CD8-positive, alpha-beta T cell (primary cell): ENCODE measurements at regions of chr9 and their contacts with region 1.

Region 1: GRCh38 chr9:134067904-134068743 is at the start of gene BRD3:
- DNase-seq: peak; percentile 60 to 95 (median 80)
- ATAC-seq: peak; percentile 77
- H3K4me3 ChIP-seq: peak within 1 kb of the TSS; percentile 74 to 89
- H3K4me3 Mint-ChIP-seq: peak within 1 kb of the TSS; percentile 87
- H3K27ac ChIP-seq: peak within 1 kb of the TSS; percentile 87 to 90
- H3K27ac Mint-ChIP-seq: peak within 1 kb of the TSS; percentile 96
- H3K4me1 ChIP-seq: peaks cover 12% of the 10 kb centered on the region
- H3K4me1 Mint-ChIP-seq: peaks cover 32% of the 10 kb centered on the region
- H3K27me3 ChIP-seq: peaks cover 4% of the 10 kb centered on the region in 2 experiments
- H3K27me3 Mint-ChIP-seq: peaks cover 21% of the 10 kb centered on the region
- CTCF ChIP-seq: no peak
- total RNA-seq, gene BRD3: 34.3 to 41.4 TPM

Region 2: DNA sequence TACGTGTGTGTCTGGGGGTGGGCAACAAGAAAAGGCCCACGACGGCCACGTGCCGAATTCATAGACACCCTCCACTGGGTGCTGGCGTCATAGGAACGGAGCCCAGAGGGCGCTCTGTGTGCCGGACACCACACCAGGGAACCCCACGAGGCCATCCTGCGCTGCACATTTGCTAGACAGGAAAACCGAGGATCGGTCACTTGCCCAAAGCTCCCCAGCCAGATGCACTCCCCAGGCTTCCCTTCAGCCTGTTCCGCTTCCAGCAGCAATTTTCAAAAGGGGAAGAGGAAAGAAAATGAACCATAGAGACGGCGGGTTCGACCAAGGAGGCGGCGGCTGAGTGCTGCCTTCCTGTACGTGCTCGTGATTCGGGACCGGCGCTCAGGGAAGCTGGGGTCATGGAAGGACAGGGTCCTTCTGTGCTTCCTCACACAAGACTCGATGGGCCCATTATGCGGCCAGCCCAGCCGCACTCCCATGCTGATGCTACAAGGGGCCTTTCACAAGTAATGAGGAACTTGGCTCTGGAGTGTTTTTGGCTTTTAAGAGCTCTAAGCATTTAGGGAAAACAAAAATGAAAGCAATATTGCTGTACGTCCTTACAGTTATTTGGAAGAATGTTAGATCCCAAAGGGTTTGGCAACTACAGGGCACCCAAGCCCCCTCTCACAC is 205.4 kb before region 1 on chr9:
- CTCF ChIA-PET with region 1: no interaction called
- POLR2A ChIA-PET with region 1: no interaction called
- intact Hi-C with region 1: no loop called
- DNase-seq: no peak
- ATAC-seq: no peak
- H3K4me3 ChIP-seq: no peak overlapping the region
- H3K4me3 Mint-ChIP-seq: no peak overlapping the region
- H3K27ac ChIP-seq: no peak overlapping the region
- H3K27ac Mint-ChIP-seq: no peak overlapping the region
- H3K4me1 ChIP-seq: no peaks in the 10 kb centered on the region
- H3K4me1 Mint-ChIP-seq: no peaks in the 10 kb centered on the region
- H3K27me3 ChIP-seq: no peaks in the 10 kb centered on the region
- H3K27me3 Mint-ChIP-seq: no peaks in the 10 kb centered on the region
- CTCF ChIP-seq: no peak

Region 3: GRCh38 chr9:133992780-133993634 is 75.1 kb before region 1 on chr9:
- CTCF ChIA-PET with region 1: interaction called, 4 read pairs
- POLR2A ChIA-PET with region 1: no interaction called
- intact Hi-C with region 1: loop called (anchors 1 to 2 kb)
- DNase-seq: peak; percentile 51 to 87 (median 74)
- ATAC-seq: peak; percentile 86
- H3K4me3 ChIP-seq: peak overlapping the region; percentile 72 to 76
- H3K4me3 Mint-ChIP-seq: peak overlapping the region; percentile 82
- H3K27ac ChIP-seq: no peak overlapping the region
- H3K27ac Mint-ChIP-seq: no peak overlapping the region
- H3K4me1 ChIP-seq: peaks cover 15% of the 10 kb centered on the region
- H3K4me1 Mint-ChIP-seq: peaks cover 5% of the 10 kb centered on the region
- H3K27me3 ChIP-seq: peaks cover 0 to 9% of the 10 kb centered on the region in 2 experiments
- H3K27me3 Mint-ChIP-seq: peaks cover 8% of the 10 kb centered on the region
- CTCF ChIP-seq: no peak

Region 4: GRCh38 chr9:134049236-134049635 is 18.9 kb before region 1 on chr9:
- CTCF ChIA-PET with region 1: no interaction called
- POLR2A ChIA-PET with region 1: no interaction called
- intact Hi-C with region 1: no loop called
- DNase-seq: no peak
- ATAC-seq: no peak
- H3K4me3 ChIP-seq: no peak overlapping the region
- H3K4me3 Mint-ChIP-seq: no peak overlapping the region
- H3K27ac ChIP-seq: no peak overlapping the region
- H3K27ac Mint-ChIP-seq: no peak overlapping the region
- H3K4me1 ChIP-seq: no peaks in the 10 kb centered on the region
- H3K4me1 Mint-ChIP-seq: no peaks in the 10 kb centered on the region
- H3K27me3 ChIP-seq: no peaks in the 10 kb centered on the region
- H3K27me3 Mint-ChIP-seq: no peaks in the 10 kb centered on the region
- CTCF ChIP-seq: no peak

Region 5: GRCh38 chr9:134099123-134099787 is 31.1 kb after region 1 on chr9:
- CTCF ChIA-PET with region 1: no interaction called
- POLR2A ChIA-PET with region 1: interaction called, 4 read pairs
- intact Hi-C with region 1: loop called in 1 of 2 experiments (anchors 1 kb)
- DNase-seq: peak; percentile 24 to 73 (median 62)
- ATAC-seq: peak; percentile 99
- H3K4me3 ChIP-seq: no peak overlapping the region
- H3K4me3 Mint-ChIP-seq: no peak overlapping the region
- H3K27ac ChIP-seq: no peak overlapping the region
- H3K27ac Mint-ChIP-seq: no peak overlapping the region
- H3K4me1 ChIP-seq: no peaks in the 10 kb centered on the region
- H3K4me1 Mint-ChIP-seq: no peaks in the 10 kb centered on the region
- H3K27me3 ChIP-seq: peaks cover 0 to 8% of the 10 kb centered on the region in 2 experiments
- H3K27me3 Mint-ChIP-seq: peaks cover 15% of the 10 kb centered on the region
- CTCF ChIP-seq: peak; percentile 90

Region 6: GRCh38 chr9:134163353-134164196 is 95.5 kb after region 1 on chr9:
- CTCF ChIA-PET with region 1: no interaction called
- POLR2A ChIA-PET with region 1: interaction called, 10 read pairs
- intact Hi-C with region 1: loop called (anchors 1 kb)
- DNase-seq: peak; percentile 38 to 87 (median 68)
- ATAC-seq: peak; percentile 19
- H3K4me3 ChIP-seq: no peak overlapping the region
- H3K4me3 Mint-ChIP-seq: no peak overlapping the region
- H3K27ac ChIP-seq: no peak overlapping the region
- H3K27ac Mint-ChIP-seq: no peak overlapping the region
- H3K4me1 ChIP-seq: peaks cover 18% of the 10 kb centered on the region
- H3K4me1 Mint-ChIP-seq: peaks cover 17% of the 10 kb centered on the region
- H3K27me3 ChIP-seq: no peaks in the 10 kb centered on the region
- H3K27me3 Mint-ChIP-seq: no peaks in the 10 kb centered on the region
- CTCF ChIP-seq: peak; percentile 32

Region 7: DNA sequence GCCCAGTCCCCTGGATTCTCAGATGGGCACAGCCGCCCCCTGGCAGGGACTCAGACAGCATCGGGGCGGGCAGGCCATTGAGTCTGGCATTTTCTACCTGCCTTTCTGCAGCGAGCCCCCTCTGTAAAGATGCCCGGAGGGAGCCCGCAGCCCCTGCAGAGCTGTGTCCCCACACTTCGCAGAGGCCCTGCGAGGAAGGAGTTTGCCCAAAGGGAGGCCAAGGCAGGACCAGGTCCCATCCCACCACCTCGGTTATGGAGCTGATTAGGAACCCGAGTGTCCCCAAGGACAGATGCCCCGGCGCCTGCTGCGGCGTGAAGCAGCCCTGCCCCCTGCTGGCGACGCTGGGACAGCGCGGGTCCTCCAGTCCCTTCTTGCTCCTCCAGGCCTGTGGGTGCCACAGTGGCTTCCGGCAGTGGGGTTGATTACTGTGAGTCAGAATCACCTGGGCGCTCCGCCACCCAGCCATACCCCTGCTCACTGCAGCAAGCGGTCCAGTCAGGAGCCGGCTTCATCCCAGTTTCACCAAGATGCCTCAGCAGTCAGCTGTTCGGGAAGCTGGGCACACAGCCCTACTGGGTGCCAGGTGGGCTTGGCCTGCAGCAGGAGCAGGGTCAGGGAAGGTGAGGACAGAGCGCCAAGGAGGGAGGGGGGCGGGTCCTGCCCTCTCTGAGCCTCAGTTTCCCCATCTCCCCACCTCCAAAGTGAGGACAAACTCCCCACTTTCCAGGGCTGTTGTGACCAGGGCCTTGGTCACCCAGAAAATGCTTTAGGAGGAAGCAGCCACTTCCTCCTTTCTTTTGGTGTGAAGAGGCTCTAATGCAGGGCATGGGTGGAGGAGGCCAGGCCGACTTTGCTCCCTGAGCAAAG is 375.3 kb after region 1 on chr9:
- CTCF ChIA-PET with region 1: no interaction called
- POLR2A ChIA-PET with region 1: no interaction called
- intact Hi-C with region 1: loop called in 1 of 2 experiments (anchors 5 kb)
- DNase-seq: peak; percentile 70 to 94 (median 88)
- ATAC-seq: peak; percentile 99
- H3K4me3 ChIP-seq: no peak overlapping the region
- H3K4me3 Mint-ChIP-seq: no peak overlapping the region
- H3K27ac ChIP-seq: peak overlapping the region in 1 of 2 experiments; percentile 28
- H3K27ac Mint-ChIP-seq: peak overlapping the region; percentile 67
- H3K4me1 ChIP-seq: peaks cover 12% of the 10 kb centered on the region
- H3K4me1 Mint-ChIP-seq: peaks cover 12% of the 10 kb centered on the region
- H3K27me3 ChIP-seq: peaks cover 5 to 8% of the 10 kb centered on the region in 2 experiments
- H3K27me3 Mint-ChIP-seq: peaks cover 4% of the 10 kb centered on the region
- CTCF ChIP-seq: peak; percentile 91